A549 (cell line): ENCODE measurements at regions of chr9 and their contacts with region 1.

Region 1: DNA sequence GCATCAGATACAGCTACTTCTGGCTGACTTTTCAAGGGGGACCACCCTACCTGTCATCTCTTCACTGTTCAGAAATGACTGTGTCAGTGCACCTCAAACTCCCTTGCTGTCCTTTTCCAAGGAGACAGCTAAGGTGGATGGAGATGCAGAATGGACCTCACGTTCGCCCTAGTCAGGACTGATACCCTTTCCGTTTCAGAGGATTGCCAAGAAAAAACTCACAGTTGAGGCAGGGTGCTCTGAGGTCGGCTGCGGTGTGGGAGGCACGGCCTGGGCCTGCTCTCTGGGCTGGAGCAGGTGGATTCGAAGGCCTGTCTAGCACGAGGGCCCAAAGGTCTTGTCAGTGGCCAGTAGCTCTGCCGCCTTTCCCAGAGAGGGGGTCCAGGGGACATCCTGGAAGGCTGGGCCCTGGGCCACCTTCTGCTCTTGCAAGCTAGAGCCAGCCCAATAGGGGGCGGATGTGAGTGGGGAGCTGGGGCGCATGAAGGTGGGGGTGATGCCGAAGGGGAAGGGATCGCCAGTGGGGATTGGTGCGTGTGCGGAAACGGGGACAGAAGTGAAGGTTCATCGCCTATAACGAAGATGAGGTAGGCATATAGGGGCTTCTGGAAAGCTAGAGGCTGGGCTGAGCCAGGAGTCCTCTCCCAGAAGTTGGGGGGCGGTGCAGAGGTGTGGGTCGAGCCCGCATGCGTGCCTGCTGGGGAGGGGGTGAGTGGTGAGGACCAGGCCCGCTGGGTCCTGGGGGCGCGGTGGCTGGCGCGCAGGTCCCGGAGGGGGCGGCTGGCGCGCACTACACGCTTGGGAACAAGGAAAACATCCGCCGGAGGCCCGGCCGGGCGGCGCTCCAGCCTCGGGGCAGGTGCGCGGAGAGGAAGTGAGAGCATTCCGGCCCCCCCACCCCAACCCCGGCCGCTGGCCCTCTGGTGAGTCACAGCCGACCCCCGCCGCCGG is 2.5 kb upstream of the MSMP start:
- DNase-seq: peak; percentile 64 to 86
- ATAC-seq: peak; percentile 89 to 91
- H3K4me3 ChIP-seq: peak overlapping the region; percentile 83
- H3K27ac ChIP-seq: peak overlapping the region; percentile 95 to 97
- H3K4me1 ChIP-seq: peaks cover 16% of the 10 kb centered on the region
- CTCF ChIP-seq: peak; percentile 69
- EP300 ChIP-seq: no peak
- POLR2A ChIP-seq: peak; percentile 19
- RAD21 ChIP-seq: peak; percentile 34 to 42; a peak in 3 of 5 replicates

Region 2: DNA sequence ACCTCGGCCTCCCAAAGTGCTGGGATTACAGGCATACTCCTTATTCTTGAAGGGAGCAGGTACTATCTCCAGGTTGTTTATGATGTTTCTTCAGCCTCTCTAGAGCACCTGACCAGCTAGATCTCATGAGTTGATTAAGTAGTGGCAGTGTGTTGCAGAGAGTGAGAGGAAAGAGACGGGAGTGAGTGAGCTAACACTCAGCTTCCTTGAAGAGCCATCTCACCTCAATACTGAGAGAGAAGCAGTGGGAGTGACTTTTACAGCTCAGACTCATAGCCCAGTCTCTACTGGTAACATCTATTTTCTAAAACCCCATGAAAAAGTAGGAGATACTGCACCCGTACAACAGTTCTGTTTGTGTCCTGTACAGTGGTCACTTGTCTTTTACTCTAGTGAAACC is 310.5 kb before region 1 on chr9:
- CTCF ChIA-PET with region 1: no interaction called
- POLR2A ChIA-PET with region 1: no interaction called
- DNase-seq: no peak
- ATAC-seq: no peak
- H3K4me3 ChIP-seq: no peak overlapping the region
- H3K27ac ChIP-seq: no peak overlapping the region
- H3K4me1 ChIP-seq: peaks cover 10% of the 10 kb centered on the region; the same call in 2 of the 3 replicates
- CTCF ChIP-seq: no peak
- EP300 ChIP-seq: no peak
- POLR2A ChIP-seq: no peak
- RAD21 ChIP-seq: no peak

Region 3: GRCh38 chr9:35723426-35723825 is 33.1 kb before region 1 on chr9:
- CTCF ChIA-PET with region 1: no interaction called
- POLR2A ChIA-PET with region 1: no interaction called
- DNase-seq: no peak
- ATAC-seq: no peak
- H3K4me3 ChIP-seq: no peak overlapping the region
- H3K27ac ChIP-seq: no peak overlapping the region
- H3K4me1 ChIP-seq: peaks cover 17% of the 10 kb centered on the region
- CTCF ChIP-seq: no peak
- EP300 ChIP-seq: no peak
- POLR2A ChIP-seq: no peak
- RAD21 ChIP-seq: no peak

Region 4: DNA sequence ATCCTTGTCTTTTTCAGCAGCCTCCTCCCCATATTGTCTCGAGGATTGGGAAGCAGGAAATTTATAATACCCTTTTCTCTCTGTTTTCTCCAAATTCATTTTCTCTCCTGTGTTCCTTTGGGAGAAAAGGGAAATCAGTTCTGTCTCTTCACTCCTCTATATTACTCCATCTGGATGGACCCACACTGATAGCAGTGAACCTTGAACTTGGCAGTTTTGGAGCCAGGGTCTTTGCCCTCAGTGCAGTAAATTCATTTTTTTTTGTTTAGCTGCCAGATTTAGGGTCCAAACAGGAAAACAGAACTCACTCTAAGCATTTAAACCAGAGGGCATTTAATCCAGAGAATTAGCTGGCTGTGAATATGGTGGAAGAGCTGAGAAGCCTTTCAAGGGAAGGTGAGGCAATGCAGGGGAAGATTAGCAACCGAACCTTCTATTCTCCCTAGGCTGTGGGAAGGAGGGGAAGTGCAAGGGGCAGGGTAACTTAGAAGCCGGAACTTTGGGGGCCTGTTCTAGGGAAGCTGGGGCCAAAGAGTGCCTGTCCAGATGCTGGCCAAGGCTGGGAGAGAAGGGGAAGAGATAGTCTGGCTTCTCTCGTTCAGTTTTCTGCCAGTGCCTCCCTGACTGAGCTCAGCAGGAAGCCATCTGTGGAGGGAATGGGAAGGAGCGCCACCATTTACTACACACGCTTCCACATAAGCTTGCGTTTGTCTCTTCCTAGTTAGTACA is 18.5 kb after region 1 on chr9:
- CTCF ChIA-PET with region 1: interaction called, 16 read pairs
- POLR2A ChIA-PET with region 1: interaction called, 4 read pairs
- DNase-seq: no peak
- ATAC-seq: no peak; a peak in 1 of 6 replicates
- H3K4me3 ChIP-seq: no peak overlapping the region
- H3K27ac ChIP-seq: no peak overlapping the region
- H3K4me1 ChIP-seq: peaks cover 23% of the 10 kb centered on the region
- CTCF ChIP-seq: no peak
- EP300 ChIP-seq: no peak
- POLR2A ChIP-seq: no peak
- RAD21 ChIP-seq: no peak

Region 5: DNA sequence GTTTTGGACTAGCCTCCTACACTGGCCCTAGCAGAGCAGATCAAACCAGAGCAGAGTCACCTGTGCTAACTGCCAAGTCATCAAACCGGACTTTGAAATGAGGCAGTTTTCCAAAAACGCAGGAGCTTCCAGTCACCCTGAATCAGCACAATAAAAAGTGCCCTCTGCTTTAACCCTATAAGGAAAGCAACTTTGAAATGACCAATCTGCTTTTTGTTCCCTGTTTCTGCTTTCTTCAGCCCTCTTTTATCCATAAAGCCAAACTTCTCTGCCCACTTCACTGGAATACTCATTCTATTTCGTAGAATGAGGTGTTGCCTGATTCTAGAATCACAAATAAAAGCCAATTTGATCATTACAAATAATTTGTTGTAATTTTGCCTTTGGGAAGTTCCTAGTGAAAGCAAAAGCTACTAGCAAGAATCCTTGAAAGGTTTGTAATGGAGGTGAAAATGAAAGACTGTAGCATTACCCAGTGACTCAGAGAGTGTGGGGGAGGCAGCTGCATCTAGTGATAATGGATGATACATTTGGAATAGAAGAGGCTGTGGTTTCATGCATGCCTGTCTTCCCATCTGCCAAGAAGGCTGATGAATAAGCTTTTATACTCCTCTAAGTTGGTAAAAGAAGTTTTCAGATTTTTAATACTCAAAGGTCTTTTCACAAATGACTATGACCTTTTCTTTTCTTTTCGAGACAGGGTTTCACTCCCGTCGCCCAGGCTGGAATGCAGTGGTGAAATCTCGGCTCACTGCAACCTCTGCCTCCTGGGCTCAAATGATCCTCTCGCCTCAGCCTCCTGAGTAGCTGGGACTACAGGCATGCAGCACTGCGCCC is 167.6 kb after region 1 on chr9:
- CTCF ChIA-PET with region 1: no interaction called
- POLR2A ChIA-PET with region 1: no interaction called
- DNase-seq: peak; percentile 61 to 92
- ATAC-seq: peak; percentile 92 to 93
- H3K4me3 ChIP-seq: no peak overlapping the region
- H3K27ac ChIP-seq: peak overlapping the region; percentile 78 to 90
- H3K4me1 ChIP-seq: peaks cover 24% of the 10 kb centered on the region
- CTCF ChIP-seq: no peak
- EP300 ChIP-seq: peak in 1 of 2 experiments; percentile 32; a peak in 1 of 5 replicates
- POLR2A ChIP-seq: no peak
- RAD21 ChIP-seq: no peak

Region 6: GRCh38 chr9:36036780-36037548 is 280.4 kb after region 1 on chr9 and contains the start of gene RECK:
- CTCF ChIA-PET with region 1: no interaction called
- POLR2A ChIA-PET with region 1: no interaction called
- DNase-seq: peak; percentile 62 to 85
- ATAC-seq: peak; percentile 93 to 94
- H3K4me3 ChIP-seq: peak within 1 kb of the TSS; percentile 79
- H3K27ac ChIP-seq: peak within 1 kb of the TSS; percentile 74 to 93
- H3K4me1 ChIP-seq: peaks cover 27% of the 10 kb centered on the region
- CTCF ChIP-seq: no peak
- EP300 ChIP-seq: no peak
- POLR2A ChIP-seq: peak; percentile 62
- RAD21 ChIP-seq: no peak
- polyA plus RNA-seq, gene RECK: 8.3 and 8.7 TPM in 2 replicates